ENCODE measurements at regions of chr11 and their contacts with region 1.

Region 1: DNA sequence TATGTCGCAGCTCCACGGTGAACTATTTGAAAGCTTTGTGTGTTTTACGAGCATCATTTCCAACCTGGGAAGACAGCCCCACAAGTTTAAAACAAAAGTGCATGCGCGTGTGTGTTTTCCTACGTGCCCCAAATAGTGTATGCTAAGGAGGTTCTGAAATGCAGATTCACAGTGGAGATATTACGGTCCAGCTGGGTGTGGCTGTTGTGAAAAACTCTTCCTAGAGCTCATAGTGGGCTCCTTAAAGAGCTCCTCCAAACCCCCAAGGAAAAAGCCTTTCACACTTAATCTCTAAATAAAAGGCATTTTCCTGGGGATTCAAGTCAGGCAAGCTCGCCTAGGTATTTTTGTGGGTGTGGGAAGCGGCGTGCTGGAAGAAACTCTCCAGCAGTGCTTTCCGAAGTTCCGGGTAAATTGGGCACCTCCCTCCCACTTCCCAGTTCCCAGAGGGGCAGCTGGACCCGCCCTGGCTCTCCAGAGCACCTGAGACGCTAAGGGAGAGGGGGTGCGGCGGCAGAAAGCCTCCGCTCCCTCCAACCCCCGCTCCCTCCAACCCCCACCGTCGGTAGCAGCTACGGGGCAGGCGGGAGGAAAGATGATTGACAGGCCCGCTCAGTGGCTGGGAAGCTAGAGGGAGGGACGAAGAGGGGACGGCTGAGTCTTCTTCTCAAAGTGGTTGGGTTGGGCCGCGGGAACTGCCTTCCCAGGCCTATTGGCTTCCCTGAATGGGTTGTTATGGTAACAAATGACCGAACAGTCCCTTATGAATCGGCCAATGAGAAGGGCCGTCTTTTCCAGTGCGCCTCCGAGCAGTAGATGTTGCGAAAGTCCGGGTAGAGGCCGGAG is 558 bp upstream of the PCF11 start:
- DNase-seq: peak; percentile 90 to 100 (median 97)
- ATAC-seq: peak; percentile 87 to 90 (median 88)
- H3K4me3 ChIP-seq: peak overlapping the region; percentile 98 to 99
- H3K4me3 Mint-ChIP-seq: peak overlapping the region; percentile 96 to 100 (median 99)
- H3K27ac ChIP-seq: peak overlapping the region; percentile 98
- H3K27ac Mint-ChIP-seq: peak overlapping the region; percentile 100
- H3K4me1 ChIP-seq: peaks cover 11 to 21% of the 10 kb centered on the region in 2 experiments
- H3K4me1 Mint-ChIP-seq: peaks cover 25 to 32% (median 25%) of the 10 kb centered on the region in 3 donors
- H3K27me3 ChIP-seq: no peaks in the 10 kb centered on the region
- H3K27me3 Mint-ChIP-seq: no peaks in the 10 kb centered on the region

Region 2: GRCh38 chr11:82692981-82693380 is 463.4 kb before region 1 on chr11:
- CTCF ChIA-PET with region 1: no interaction called
- POLR2A ChIA-PET with region 1: no interaction called
- DNase-seq: no peak
- ATAC-seq: no peak
- H3K4me3 ChIP-seq: no peak overlapping the region
- H3K4me3 Mint-ChIP-seq: no peak overlapping the region
- H3K27ac ChIP-seq: no peak overlapping the region
- H3K27ac Mint-ChIP-seq: no peak overlapping the region
- H3K4me1 ChIP-seq: no peaks in the 10 kb centered on the region
- H3K4me1 Mint-ChIP-seq: peaks cover 0 to 4% (median 0%) of the 10 kb centered on the region in 3 donors
- H3K27me3 ChIP-seq: no peaks in the 10 kb centered on the region
- H3K27me3 Mint-ChIP-seq: peaks cover 0 to 13% of the 10 kb centered on the region in 2 donors

Region 3: DNA sequence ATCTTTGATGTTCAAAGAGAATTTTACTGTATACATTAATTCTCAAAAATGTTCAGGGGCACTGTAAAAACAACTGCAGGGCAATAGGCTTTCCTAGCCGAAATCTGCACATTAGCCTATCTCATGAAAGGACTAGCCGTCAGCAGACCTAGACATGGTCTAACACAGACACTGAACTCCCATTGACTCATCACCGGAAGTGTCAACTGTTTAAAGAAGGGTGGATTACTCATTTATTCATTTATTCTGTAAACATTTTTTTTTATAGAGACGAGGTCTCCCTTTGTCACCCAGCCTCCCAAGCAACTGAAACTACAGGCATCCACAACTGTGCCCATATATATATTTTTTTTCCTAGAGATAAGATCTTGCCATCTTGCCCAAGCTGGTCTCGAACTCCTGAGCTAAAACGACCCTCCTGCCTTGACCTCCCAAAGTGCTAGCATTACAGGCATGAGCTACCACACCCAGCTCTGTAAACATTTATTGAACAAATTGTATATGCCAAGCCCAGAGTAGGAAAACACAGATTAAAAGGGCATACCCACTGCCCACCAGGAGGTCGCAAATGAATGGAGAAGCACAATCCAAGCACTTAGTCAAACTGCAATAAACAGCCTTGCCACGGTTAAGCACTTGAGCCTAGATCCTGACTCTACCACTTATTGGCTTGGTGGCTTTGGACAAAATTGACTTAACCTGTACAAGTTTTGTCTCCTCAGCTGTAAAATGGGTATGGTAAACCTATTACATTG is 111.2 kb before region 1 on chr11:
- CTCF ChIA-PET with region 1: no interaction called
- POLR2A ChIA-PET with region 1: no interaction called
- DNase-seq: peak in 1 of 35 experiments; percentile 38
- ATAC-seq: peak; percentile 50 to 73 (median 69)
- H3K4me3 ChIP-seq: no peak overlapping the region
- H3K4me3 Mint-ChIP-seq: no peak overlapping the region
- H3K27ac ChIP-seq: no peak overlapping the region
- H3K27ac Mint-ChIP-seq: peak overlapping the region in 1 of 2 donors; percentile 55
- H3K4me1 ChIP-seq: peaks cover 0 to 7% of the 10 kb centered on the region in 2 experiments
- H3K4me1 Mint-ChIP-seq: peaks cover 39 to 50% (median 47%) of the 10 kb centered on the region in 3 donors
- H3K27me3 ChIP-seq: no peaks in the 10 kb centered on the region
- H3K27me3 Mint-ChIP-seq: no peaks in the 10 kb centered on the region

Region 4: GRCh38 chr11:83071567-83072349 is 84.6 kb before region 1 on chr11 and contains the start of gene RAB30:
- CTCF ChIA-PET with region 1: interaction called, 4 to 11 read pairs
- POLR2A ChIA-PET with region 1: interaction called, 3 to 22 read pairs
- DNase-seq: peak; percentile 83 to 99 (median 95)
- ATAC-seq: peak; percentile 93 to 96 (median 94)
- H3K4me3 ChIP-seq: peak within 1 kb of the TSS; percentile 83 to 84
- H3K4me3 Mint-ChIP-seq: no peak within 1 kb of the TSS
- H3K27ac ChIP-seq: peak within 1 kb of the TSS; percentile 91
- H3K27ac Mint-ChIP-seq: no peak within 1 kb of the TSS
- H3K4me1 ChIP-seq: peaks cover 25 to 28% of the 10 kb centered on the region in 2 experiments
- H3K4me1 Mint-ChIP-seq: peaks cover 12 to 40% (median 39%) of the 10 kb centered on the region in 3 donors
- H3K27me3 ChIP-seq: no peaks in the 10 kb centered on the region
- H3K27me3 Mint-ChIP-seq: no peaks in the 10 kb centered on the region
- total RNA-seq, gene RAB30: 18.6 to 44.5 (median 20.1) TPM

Region 5: DNA sequence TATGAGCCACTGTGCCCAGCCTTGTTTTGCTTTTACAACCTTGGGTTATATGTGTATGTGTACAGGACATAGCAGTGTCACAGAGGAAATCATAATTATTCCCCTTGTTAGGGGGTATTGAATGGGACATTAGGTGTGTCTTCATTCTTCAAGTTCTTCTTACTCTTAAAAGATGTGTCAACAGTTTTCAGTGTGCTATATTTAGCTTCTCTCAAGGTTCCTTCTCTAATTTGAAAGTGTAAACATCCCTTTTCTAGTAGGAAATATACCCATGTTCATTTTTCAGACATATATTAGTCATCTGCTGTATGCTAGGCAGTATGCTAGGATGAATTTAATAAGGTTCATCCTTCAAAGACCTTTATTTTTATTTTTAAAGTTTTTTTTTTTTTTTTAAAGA is 17.6 kb after region 1 on chr11:
- CTCF ChIA-PET with region 1: no interaction called
- POLR2A ChIA-PET with region 1: interaction called, 5 to 11 read pairs
- DNase-seq: no peak
- ATAC-seq: peak in 3 of 4 experiments; percentile 16 to 33 (median 23)
- H3K4me3 ChIP-seq: no peak overlapping the region
- H3K4me3 Mint-ChIP-seq: peak overlapping the region; percentile 17 to 70 (median 52)
- H3K27ac ChIP-seq: no peak overlapping the region
- H3K27ac Mint-ChIP-seq: peak overlapping the region; percentile 46 to 69
- H3K4me1 ChIP-seq: peaks cover 34 to 43% of the 10 kb centered on the region in 2 experiments
- H3K4me1 Mint-ChIP-seq: peaks cover 65 to 77% (median 74%) of the 10 kb centered on the region in 3 donors
- H3K27me3 ChIP-seq: no peaks in the 10 kb centered on the region
- H3K27me3 Mint-ChIP-seq: no peaks in the 10 kb centered on the region

Region 6: DNA sequence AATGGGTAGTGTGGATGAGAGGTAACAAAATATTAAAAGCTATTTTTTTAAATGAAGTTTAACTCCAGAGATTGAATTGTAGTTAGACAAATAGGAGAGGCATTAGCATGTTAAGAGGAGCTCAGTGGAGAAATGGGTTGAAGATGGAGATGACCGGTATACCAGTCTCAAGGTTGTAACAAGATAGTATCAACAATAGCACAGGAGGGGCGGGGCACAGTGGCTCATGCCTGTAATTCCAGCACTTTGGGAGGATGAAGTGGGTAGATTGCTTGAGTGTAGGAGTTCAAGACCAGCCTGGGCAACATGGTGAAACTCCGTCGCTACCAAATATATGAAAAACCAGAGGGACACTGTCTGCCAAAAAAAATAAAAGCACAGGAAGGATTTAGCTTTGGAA is 31.1 kb after region 1 on chr11:
- CTCF ChIA-PET with region 1: interaction called, 5 to 10 read pairs
- POLR2A ChIA-PET with region 1: interaction called, 4 read pairs
- DNase-seq: no peak
- ATAC-seq: peak in 1 of 4 experiments; percentile 16
- H3K4me3 ChIP-seq: no peak overlapping the region
- H3K4me3 Mint-ChIP-seq: no peak overlapping the region
- H3K27ac ChIP-seq: no peak overlapping the region
- H3K27ac Mint-ChIP-seq: peak overlapping the region; percentile 11 to 37
- H3K4me1 ChIP-seq: peaks cover 3 to 6% of the 10 kb centered on the region in 2 experiments
- H3K4me1 Mint-ChIP-seq: peaks cover 15 to 19% (median 17%) of the 10 kb centered on the region in 3 donors
- H3K27me3 ChIP-seq: no peaks in the 10 kb centered on the region
- H3K27me3 Mint-ChIP-seq: no peaks in the 10 kb centered on the region

Region 7: GRCh38 chr11:83193315-83194280 is 37.2 kb after region 1 on chr11 and contains the start of gene ANKRD42:
- CTCF ChIA-PET with region 1: interaction called, 3 to 12 read pairs
- POLR2A ChIA-PET with region 1: interaction called, 4 to 12 read pairs
- DNase-seq: peak; percentile 67 to 95 (median 80)
- ATAC-seq: peak; percentile 80 to 88 (median 82)
- H3K4me3 ChIP-seq: peak within 1 kb of the TSS; percentile 84 to 96
- H3K4me3 Mint-ChIP-seq: peak within 1 kb of the TSS; percentile 90 to 99 (median 98)
- H3K27ac ChIP-seq: peak within 1 kb of the TSS; percentile 89
- H3K27ac Mint-ChIP-seq: peak within 1 kb of the TSS; percentile 99
- H3K4me1 ChIP-seq: peaks cover 16 to 19% of the 10 kb centered on the region in 2 experiments
- H3K4me1 Mint-ChIP-seq: peaks cover 48 to 60% (median 56%) of the 10 kb centered on the region in 3 donors
- H3K27me3 ChIP-seq: no peaks in the 10 kb centered on the region
- H3K27me3 Mint-ChIP-seq: no peaks in the 10 kb centered on the region
- total RNA-seq, gene ANKRD42: 6.2 to 9.7 (median 7.9) TPM

Measured in T-cell (primary cell).